A549 (cell line): ENCODE measurements at regions of chr19 and their contacts with region 1.

Region 1: GRCh38 chr19:48738557-48739399 is 1.6 kb downstream of the RASIP1 start:
- DNase-seq: peak; percentile 87 to 95
- ATAC-seq: peak; percentile 80 to 85
- H3K4me3 ChIP-seq: peak overlapping the region; percentile 59
- H3K27ac ChIP-seq: peak overlapping the region; percentile 82 to 89
- H3K4me1 ChIP-seq: peaks cover 16% of the 10 kb centered on the region
- CTCF ChIP-seq: peak; percentile 92
- EP300 ChIP-seq: no peak
- POLR2A ChIP-seq: peak; percentile 64
- RAD21 ChIP-seq: peak; percentile 34 to 81; a peak in 4 of 5 replicates

Region 2: GRCh38 chr19:48698046-48698445 is 40.7 kb before region 1 on chr19:
- CTCF ChIA-PET with region 1: interaction called, 12 read pairs
- POLR2A ChIA-PET with region 1: no interaction called
- DNase-seq: no peak
- ATAC-seq: no peak; a peak in 1 of 6 replicates
- H3K4me3 ChIP-seq: no peak overlapping the region
- H3K27ac ChIP-seq: 0 out of 6 replicates have a peak overlapping the region, but pooled peaks of 1 of the 2 experiments have one; percentile 2
- H3K4me1 ChIP-seq: peaks cover 3% of the 10 kb centered on the region; the same call in 2 of the 3 replicates
- CTCF ChIP-seq: no peak
- EP300 ChIP-seq: no peak
- POLR2A ChIP-seq: no peak
- RAD21 ChIP-seq: no peak

Region 3: GRCh38 chr19:48713864-48714758 is 24.7 kb before region 1 on chr19:
- CTCF ChIA-PET with region 1: interaction called, 28 read pairs
- POLR2A ChIA-PET with region 1: interaction called, 5 read pairs
- DNase-seq: peak; percentile 100
- ATAC-seq: peak; percentile 92
- H3K4me3 ChIP-seq: peak overlapping the region; percentile 68
- H3K27ac ChIP-seq: peak overlapping the region; percentile 86 to 90
- H3K4me1 ChIP-seq: peaks cover 16% of the 10 kb centered on the region
- CTCF ChIP-seq: no peak
- EP300 ChIP-seq: no peak
- POLR2A ChIP-seq: peak; percentile 83
- RAD21 ChIP-seq: no peak

Region 4: GRCh38 chr19:48720613-48721296 is 18.0 kb before region 1 on chr19:
- CTCF ChIA-PET with region 1: interaction called, 69 read pairs
- POLR2A ChIA-PET with region 1: interaction called, 10 read pairs
- DNase-seq: peak; percentile 100
- ATAC-seq: peak; percentile 92 to 95
- H3K4me3 ChIP-seq: peak overlapping the region; percentile 53
- H3K27ac ChIP-seq: peak overlapping the region; percentile 81 to 88
- H3K4me1 ChIP-seq: peaks cover 13% of the 10 kb centered on the region
- CTCF ChIP-seq: no peak
- EP300 ChIP-seq: no peak
- POLR2A ChIP-seq: peak; percentile 24; the same call in 1 of the 2 replicates
- RAD21 ChIP-seq: no peak